CD4-positive, alpha-beta memory T cell (primary cell): ENCODE measurements at regions of chr3 and their contacts with region 1.

Region 1: GRCh38 chr3:108124337-108125152 is 33.7 kb upstream of the CD47 start:
- DNase-seq: peak; percentile 74 to 90 (median 79)
- H3K4me3 ChIP-seq: peak overlapping the region; percentile 71 to 87
- H3K4me3 Mint-ChIP-seq: peak overlapping the region; percentile 84 to 94 (median 92)
- H3K27ac ChIP-seq: peak overlapping the region; percentile 86
- H3K27ac Mint-ChIP-seq: peak overlapping the region; percentile 92 to 100 (median 98)
- H3K4me1 ChIP-seq: peaks cover 69% of the 10 kb centered on the region
- H3K4me1 Mint-ChIP-seq: peaks cover 58 to 86% (median 73%) of the 10 kb centered on the region in 4 donors
- H3K27me3 ChIP-seq: no peaks in the 10 kb centered on the region
- H3K27me3 Mint-ChIP-seq: no peaks in the 10 kb centered on the region

Region 2: DNA sequence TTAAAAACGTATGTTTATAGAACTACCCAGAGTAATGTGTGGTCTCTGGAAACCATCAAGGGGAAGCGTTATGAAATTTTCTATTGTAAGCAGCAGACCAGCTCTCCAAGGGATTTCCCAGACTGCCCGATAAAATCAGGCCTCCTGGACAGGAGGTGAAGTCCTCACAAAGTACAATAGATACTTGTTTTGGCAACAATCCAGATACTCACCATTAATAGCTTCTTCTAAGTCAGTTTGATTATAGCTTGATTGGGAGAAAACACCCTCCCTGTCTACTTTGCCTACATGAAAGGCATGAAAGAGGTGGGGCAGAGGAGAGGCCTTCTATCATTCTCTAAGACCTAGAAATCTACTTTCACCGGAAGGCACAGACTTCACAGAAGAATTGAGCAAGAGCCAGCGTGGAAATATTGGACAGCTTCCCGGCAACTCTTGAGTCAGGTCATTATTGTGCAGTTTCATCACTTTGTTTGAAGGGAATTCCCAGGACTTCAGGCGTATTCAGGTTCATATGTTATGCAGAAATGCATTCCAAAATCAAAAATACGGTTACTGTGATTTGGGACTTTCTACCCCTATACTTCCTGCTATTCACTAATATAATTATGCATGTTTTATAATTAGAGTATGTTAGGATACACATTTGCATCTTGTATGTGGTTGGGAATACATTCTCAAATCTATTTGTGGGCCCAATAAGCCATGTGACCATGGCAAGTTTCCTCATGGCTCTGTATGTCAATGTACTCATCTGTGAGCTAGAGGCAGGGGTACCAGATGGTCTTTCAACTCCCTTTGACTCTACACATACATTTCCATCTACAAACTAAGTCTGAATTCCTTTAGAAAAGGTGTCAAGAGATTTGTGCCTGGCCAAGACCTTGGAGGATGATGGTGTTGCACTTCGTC is 137.3 kb before region 1 on chr3:
- CTCF ChIA-PET with region 1: interaction called, 3 read pairs
- POLR2A ChIA-PET with region 1: interaction called, 4 read pairs
- intact Hi-C with region 1: loop called (anchors 5 kb)
- DNase-seq: no peak
- H3K4me3 ChIP-seq: no peak overlapping the region
- H3K4me3 Mint-ChIP-seq: peak overlapping the region in 3 of 8 donors; percentile 10 to 29 (median 16)
- H3K27ac ChIP-seq: no peak overlapping the region
- H3K27ac Mint-ChIP-seq: peak overlapping the region in 5 of 7 donors; percentile 17 to 67 (median 60)
- H3K4me1 ChIP-seq: peaks cover 35% of the 10 kb centered on the region
- H3K4me1 Mint-ChIP-seq: peaks cover 28 to 50% (median 39%) of the 10 kb centered on the region in 4 donors
- H3K27me3 ChIP-seq: no peaks in the 10 kb centered on the region
- H3K27me3 Mint-ChIP-seq: no peaks in the 10 kb centered on the region

Region 3: DNA sequence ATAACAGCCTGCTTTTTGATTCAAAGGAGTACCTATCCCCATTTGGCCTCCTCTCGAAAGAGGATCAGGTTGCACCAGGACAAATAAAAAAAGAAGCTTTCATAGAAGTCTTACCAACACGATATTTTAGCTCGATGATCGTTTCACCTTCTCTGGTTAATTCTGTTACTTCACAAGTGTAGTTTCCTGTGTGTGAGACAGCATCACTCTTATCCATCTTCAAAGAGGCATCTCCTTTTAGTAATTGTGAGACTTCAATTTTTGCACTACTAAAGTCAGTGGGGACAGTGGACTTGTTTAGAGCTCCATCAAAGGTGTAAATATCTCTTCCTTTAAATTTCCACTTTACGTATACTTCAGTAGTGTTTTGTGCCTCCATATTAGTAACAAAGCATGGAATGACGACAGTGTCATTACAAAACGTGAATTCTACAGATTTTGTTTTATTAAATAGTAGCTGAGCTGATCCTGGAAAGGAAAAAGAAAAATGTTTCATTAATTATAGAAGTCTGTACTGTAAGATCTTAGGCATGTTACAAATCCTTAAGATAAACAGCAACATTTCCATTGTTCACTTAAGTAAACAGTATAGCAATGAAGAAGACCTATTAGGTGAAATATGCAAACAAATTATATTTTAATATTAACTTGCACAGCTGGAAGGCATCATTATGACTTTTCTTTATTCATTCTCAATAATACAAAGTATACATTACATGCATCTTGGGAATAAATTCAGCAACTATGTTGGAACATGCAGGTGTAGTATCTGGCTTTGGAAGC is 44.5 kb before region 1 on chr3:
- CTCF ChIA-PET with region 1: no interaction called
- POLR2A ChIA-PET with region 1: interaction called, 531 read pairs
- intact Hi-C with region 1: no loop called
- DNase-seq: no peak
- H3K4me3 ChIP-seq: no peak overlapping the region
- H3K4me3 Mint-ChIP-seq: peak overlapping the region; percentile 3 to 80 (median 54)
- H3K27ac ChIP-seq: no peak overlapping the region
- H3K27ac Mint-ChIP-seq: peak overlapping the region; percentile 24 to 88 (median 77)
- H3K4me1 ChIP-seq: peaks cover 100% of the 10 kb centered on the region
- H3K4me1 Mint-ChIP-seq: peaks cover 9 to 59% (median 53%) of the 10 kb centered on the region in 4 donors
- H3K27me3 ChIP-seq: no peaks in the 10 kb centered on the region
- H3K27me3 Mint-ChIP-seq: no peaks in the 10 kb centered on the region

Region 4: GRCh38 chr3:108100906-108101660 is 23.5 kb before region 1 on chr3:
- CTCF ChIA-PET with region 1: interaction called, 4 read pairs
- POLR2A ChIA-PET with region 1: interaction called, 531 read pairs
- intact Hi-C with region 1: loop called (anchors 1 kb)
- DNase-seq: peak in 2 of 5 donors; percentile 28 to 74
- H3K4me3 ChIP-seq: no peak overlapping the region
- H3K4me3 Mint-ChIP-seq: peak overlapping the region in 5 of 8 donors; percentile 1 to 59 (median 42)
- H3K27ac ChIP-seq: no peak overlapping the region
- H3K27ac Mint-ChIP-seq: peak overlapping the region; percentile 55 to 87 (median 81)
- H3K4me1 ChIP-seq: peaks cover 29% of the 10 kb centered on the region
- H3K4me1 Mint-ChIP-seq: peaks cover 29 to 38% (median 35%) of the 10 kb centered on the region in 4 donors
- H3K27me3 ChIP-seq: no peaks in the 10 kb centered on the region
- H3K27me3 Mint-ChIP-seq: no peaks in the 10 kb centered on the region

Region 5: GRCh38 chr3:108153451-108153981 is 29.0 kb after region 1 on chr3:
- CTCF ChIA-PET with region 1: interaction called, 5 read pairs
- POLR2A ChIA-PET with region 1: interaction called, 12 read pairs
- intact Hi-C with region 1: no loop called
- DNase-seq: peak; percentile 38 to 46 (median 43)
- H3K4me3 ChIP-seq: no peak overlapping the region
- H3K4me3 Mint-ChIP-seq: no peak overlapping the region
- H3K27ac ChIP-seq: no peak overlapping the region
- H3K27ac Mint-ChIP-seq: peak overlapping the region in 3 of 7 donors; percentile 14 to 45 (median 29)
- H3K4me1 ChIP-seq: no peaks in the 10 kb centered on the region
- H3K4me1 Mint-ChIP-seq: peaks cover 5 to 14% (median 12%) of the 10 kb centered on the region in 4 donors
- H3K27me3 ChIP-seq: no peaks in the 10 kb centered on the region
- H3K27me3 Mint-ChIP-seq: no peaks in the 10 kb centered on the region

Region 6: GRCh38 chr3:108200578-108200977 is 76.0 kb after region 1 on chr3:
- CTCF ChIA-PET with region 1: no interaction called
- POLR2A ChIA-PET with region 1: no interaction called
- intact Hi-C with region 1: no loop called
- DNase-seq: no peak
- H3K4me3 ChIP-seq: no peak overlapping the region
- H3K4me3 Mint-ChIP-seq: no peak overlapping the region
- H3K27ac ChIP-seq: no peak overlapping the region
- H3K27ac Mint-ChIP-seq: no peak overlapping the region
- H3K4me1 ChIP-seq: no peaks in the 10 kb centered on the region
- H3K4me1 Mint-ChIP-seq: peaks cover 5 to 15% (median 9%) of the 10 kb centered on the region in 4 donors
- H3K27me3 ChIP-seq: no peaks in the 10 kb centered on the region
- H3K27me3 Mint-ChIP-seq: no peaks in the 10 kb centered on the region